ENCODE measurements at regions of chr1 and their contacts with region 1.

Region 1: DNA sequence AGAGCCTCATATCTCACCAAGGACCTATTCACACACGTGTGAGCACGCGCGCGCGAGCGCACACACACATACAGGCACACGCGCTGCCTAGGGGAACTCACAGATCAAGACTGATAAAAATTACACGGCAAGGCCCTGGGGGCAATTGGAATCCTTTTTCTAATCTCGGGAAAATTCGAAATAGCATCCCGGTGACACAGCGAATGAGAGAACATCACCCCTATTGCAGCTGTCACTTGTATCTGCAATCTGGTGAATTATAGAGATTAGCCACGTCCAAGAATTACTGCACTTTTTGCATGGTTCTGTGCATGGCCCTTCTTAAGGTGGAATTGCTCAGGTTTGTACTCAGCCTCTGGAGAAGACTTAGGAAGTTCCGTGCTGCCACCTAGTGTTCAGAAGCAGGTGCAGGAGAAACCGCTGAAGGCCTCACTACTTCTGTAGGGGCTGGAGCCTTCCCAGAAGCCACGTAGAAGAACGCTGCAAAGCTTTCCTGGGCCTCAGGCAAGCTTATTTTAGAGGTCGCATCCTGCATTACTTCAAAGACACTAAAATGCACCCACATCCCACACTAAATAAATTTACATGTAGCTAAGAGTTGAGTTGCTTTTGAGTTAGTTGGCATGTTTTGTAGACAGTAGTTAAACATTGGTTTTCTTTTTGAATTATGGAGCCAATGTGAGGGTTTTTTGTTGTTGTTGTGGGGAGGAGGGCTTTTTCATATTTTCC is 229.2 kb upstream of the CAMK1G start:
- DNase-seq: peak; percentile 99
- H3K4me3 Mint-ChIP-seq: peak overlapping the region; percentile 7
- H3K27ac Mint-ChIP-seq: peak overlapping the region; percentile 78
- H3K4me1 Mint-ChIP-seq: peaks cover 41% of the 10 kb centered on the region
- H3K27me3 Mint-ChIP-seq: no peaks in the 10 kb centered on the region
- CTCF ChIP-seq: peak; percentile 98

Region 2: GRCh38 chr1:208807446-208808127 is 546.7 kb before region 1 on chr1:
- CTCF ChIA-PET with region 1: no interaction called
- POLR2A ChIA-PET with region 1: interaction called, 8 read pairs
- intact Hi-C with region 1: loop called (anchors 1 kb)
- DNase-seq: peak; percentile 96
- H3K4me3 Mint-ChIP-seq: no peak overlapping the region
- H3K27ac Mint-ChIP-seq: peak overlapping the region; percentile 91
- H3K4me1 Mint-ChIP-seq: peaks cover 37% of the 10 kb centered on the region
- H3K27me3 Mint-ChIP-seq: no peaks in the 10 kb centered on the region
- CTCF ChIP-seq: no peak

Region 3: DNA sequence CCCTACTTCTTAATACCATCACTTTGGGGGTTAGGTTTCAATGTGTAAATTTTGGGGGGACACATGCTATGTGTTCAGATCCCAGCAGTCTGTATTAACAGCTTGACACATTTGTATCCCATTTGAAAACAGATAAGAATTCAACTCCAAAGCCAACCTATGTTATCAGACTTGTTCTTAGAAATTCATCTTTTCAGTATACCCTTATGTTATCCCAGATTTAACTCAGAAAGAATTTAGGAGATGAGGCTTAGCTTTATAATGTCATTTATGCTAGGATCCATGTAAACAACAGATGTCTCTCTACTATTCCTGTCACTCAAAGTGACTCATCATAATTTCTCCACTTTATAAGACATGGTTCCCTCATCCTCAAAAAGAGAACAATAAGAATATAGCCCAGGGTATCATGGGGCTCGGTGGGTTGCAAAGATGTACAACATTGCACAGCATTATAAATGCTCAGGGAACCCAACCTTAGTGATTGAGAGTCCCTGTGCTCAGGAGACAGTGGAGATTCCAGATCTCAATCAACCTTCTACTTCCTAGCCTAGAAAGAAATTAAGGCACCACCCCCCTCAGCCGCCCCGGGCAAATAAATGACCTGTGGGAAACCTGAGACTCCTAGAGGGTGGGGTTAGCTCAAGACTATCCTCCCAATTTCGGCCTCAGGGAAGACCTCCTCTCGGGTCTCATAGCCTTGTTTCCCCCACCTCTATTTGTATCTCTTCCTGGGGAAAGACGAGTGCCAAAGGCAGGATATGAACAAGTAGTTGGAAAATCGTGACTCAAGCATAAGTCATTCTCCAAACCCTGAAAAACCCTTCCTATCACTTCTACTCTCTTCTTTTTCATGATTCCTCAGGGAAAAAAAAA is 35.9 kb before region 1 on chr1:
- CTCF ChIA-PET with region 1: interaction called, 23 read pairs
- POLR2A ChIA-PET with region 1: interaction called, 3 read pairs
- intact Hi-C with region 1: no loop called
- DNase-seq: peak; percentile 66
- H3K4me3 Mint-ChIP-seq: no peak overlapping the region
- H3K27ac Mint-ChIP-seq: no peak overlapping the region
- H3K4me1 Mint-ChIP-seq: peaks cover 16% of the 10 kb centered on the region
- H3K27me3 Mint-ChIP-seq: no peaks in the 10 kb centered on the region
- CTCF ChIP-seq: no peak

Region 4: GRCh38 chr1:209368864-209369598 is 14.8 kb after region 1 on chr1:
- CTCF ChIA-PET with region 1: interaction called, 714 read pairs
- POLR2A ChIA-PET with region 1: interaction called, 2,201 read pairs
- intact Hi-C with region 1: no loop called
- DNase-seq: peak; percentile 100
- H3K4me3 Mint-ChIP-seq: peak overlapping the region; percentile 40
- H3K27ac Mint-ChIP-seq: peak overlapping the region; percentile 86
- H3K4me1 Mint-ChIP-seq: peaks cover 90% of the 10 kb centered on the region
- H3K27me3 Mint-ChIP-seq: no peaks in the 10 kb centered on the region
- CTCF ChIP-seq: no peak

Region 5: GRCh38 chr1:209411491-209411929 is 57.2 kb after region 1 on chr1:
- CTCF ChIA-PET with region 1: interaction called, 1,242 read pairs
- POLR2A ChIA-PET with region 1: interaction called, 6,956 read pairs
- intact Hi-C with region 1: loop called (anchors 1 kb)
- DNase-seq: peak; percentile 99
- H3K4me3 Mint-ChIP-seq: peak overlapping the region; percentile 44
- H3K27ac Mint-ChIP-seq: peak overlapping the region; percentile 89
- H3K4me1 Mint-ChIP-seq: peaks cover 70% of the 10 kb centered on the region
- H3K27me3 Mint-ChIP-seq: no peaks in the 10 kb centered on the region
- CTCF ChIP-seq: no peak

Region 6: DNA sequence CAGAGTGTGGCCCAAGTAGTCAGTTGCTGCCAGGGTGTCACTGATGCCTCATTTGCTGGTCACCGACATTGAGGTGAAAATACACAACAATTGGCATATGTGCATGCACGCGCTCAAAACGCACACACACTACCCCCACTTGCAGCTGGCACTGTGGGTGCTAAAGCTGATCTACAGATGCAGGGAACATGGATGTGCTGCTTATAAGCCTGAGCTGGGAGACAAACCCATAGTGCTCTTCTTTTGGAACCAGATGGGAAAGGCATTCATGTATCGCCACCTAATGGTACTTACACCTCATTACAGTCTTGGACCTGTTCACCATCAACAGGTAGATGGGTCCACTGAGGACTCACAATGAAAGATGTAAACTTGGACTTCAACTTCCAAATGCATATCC is 159.0 kb after region 1 on chr1:
- CTCF ChIA-PET with region 1: interaction called, 5 read pairs
- POLR2A ChIA-PET with region 1: interaction called, 3 read pairs
- intact Hi-C with region 1: loop called (anchors 1 kb)
- DNase-seq: peak; percentile 84
- H3K4me3 Mint-ChIP-seq: no peak overlapping the region
- H3K27ac Mint-ChIP-seq: no peak overlapping the region
- H3K4me1 Mint-ChIP-seq: peaks cover 11% of the 10 kb centered on the region
- H3K27me3 Mint-ChIP-seq: no peaks in the 10 kb centered on the region
- CTCF ChIP-seq: peak; percentile 93

Region 7: GRCh38 chr1:210415846-210416448 is 1061.7 kb after region 1 on chr1:
- CTCF ChIA-PET with region 1: no interaction called
- POLR2A ChIA-PET with region 1: no interaction called
- intact Hi-C with region 1: no loop called
- DNase-seq: no peak
- H3K4me3 Mint-ChIP-seq: no peak overlapping the region
- H3K27ac Mint-ChIP-seq: no peak overlapping the region
- H3K4me1 Mint-ChIP-seq: no peaks in the 10 kb centered on the region
- H3K27me3 Mint-ChIP-seq: no peaks in the 10 kb centered on the region
- CTCF ChIP-seq: no peak